Heart left ventricle (tissue), 16 donors: ENCODE measurements at regions of chr4 and their contacts with region 1.

Region 1: GRCh38 chr4:44760142-44760898 is 34.0 kb upstream of the GNPDA2 start:
- DNase-seq: no peak
- ATAC-seq: peak; percentile 37 to 83 (median 68)
- H3K4me3 ChIP-seq: no peak overlapping the region
- H3K27ac ChIP-seq: peak overlapping the region in 1 of 12 donors; percentile 16
- H3K4me1 ChIP-seq: peaks cover 0 to 4% (median 0%) of the 10 kb centered on the region in 12 donors
- H3K27me3 ChIP-seq: no peaks in the 10 kb centered on the region
- CTCF ChIP-seq: peak; percentile 30 to 62 (median 48)
- POLR2A ChIP-seq: no peak

Region 2: DNA sequence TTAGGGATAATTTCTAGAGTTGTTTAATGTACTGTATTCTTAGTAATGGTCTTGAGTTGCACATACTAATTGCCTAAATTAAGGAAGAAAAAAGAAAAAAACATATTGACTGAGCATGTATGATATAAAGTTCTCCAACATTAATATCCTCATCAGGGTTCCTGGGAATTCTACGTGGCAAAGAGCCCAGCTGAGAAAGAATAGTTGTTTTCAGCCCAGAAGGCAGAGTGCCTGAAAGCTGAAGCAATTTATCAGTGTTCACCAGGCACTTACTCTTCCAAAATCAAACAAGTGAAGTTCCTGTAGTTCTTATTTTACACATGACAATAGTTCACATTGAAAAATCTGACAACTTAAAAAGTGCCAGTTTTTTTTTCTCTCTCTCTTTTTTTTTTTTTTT is 136.6 kb before region 1 on chr4:
- intact Hi-C with region 1: no loop called
- DNase-seq: no peak
- ATAC-seq: no peak
- H3K4me3 ChIP-seq: no peak overlapping the region
- H3K27ac ChIP-seq: no peak overlapping the region
- H3K4me1 ChIP-seq: no peaks in the 10 kb centered on the region
- H3K27me3 ChIP-seq: no peaks in the 10 kb centered on the region
- CTCF ChIP-seq: no peak
- POLR2A ChIP-seq: no peak

Region 3: GRCh38 chr4:44662623-44663005 is 97.7 kb before region 1 on chr4:
- intact Hi-C with region 1: no loop called
- DNase-seq: no peak
- ATAC-seq: no peak
- H3K4me3 ChIP-seq: no peak overlapping the region
- H3K27ac ChIP-seq: no peak overlapping the region
- H3K4me1 ChIP-seq: no peaks in the 10 kb centered on the region
- H3K27me3 ChIP-seq: no peaks in the 10 kb centered on the region
- CTCF ChIP-seq: no peak
- POLR2A ChIP-seq: no peak

Region 4: DNA sequence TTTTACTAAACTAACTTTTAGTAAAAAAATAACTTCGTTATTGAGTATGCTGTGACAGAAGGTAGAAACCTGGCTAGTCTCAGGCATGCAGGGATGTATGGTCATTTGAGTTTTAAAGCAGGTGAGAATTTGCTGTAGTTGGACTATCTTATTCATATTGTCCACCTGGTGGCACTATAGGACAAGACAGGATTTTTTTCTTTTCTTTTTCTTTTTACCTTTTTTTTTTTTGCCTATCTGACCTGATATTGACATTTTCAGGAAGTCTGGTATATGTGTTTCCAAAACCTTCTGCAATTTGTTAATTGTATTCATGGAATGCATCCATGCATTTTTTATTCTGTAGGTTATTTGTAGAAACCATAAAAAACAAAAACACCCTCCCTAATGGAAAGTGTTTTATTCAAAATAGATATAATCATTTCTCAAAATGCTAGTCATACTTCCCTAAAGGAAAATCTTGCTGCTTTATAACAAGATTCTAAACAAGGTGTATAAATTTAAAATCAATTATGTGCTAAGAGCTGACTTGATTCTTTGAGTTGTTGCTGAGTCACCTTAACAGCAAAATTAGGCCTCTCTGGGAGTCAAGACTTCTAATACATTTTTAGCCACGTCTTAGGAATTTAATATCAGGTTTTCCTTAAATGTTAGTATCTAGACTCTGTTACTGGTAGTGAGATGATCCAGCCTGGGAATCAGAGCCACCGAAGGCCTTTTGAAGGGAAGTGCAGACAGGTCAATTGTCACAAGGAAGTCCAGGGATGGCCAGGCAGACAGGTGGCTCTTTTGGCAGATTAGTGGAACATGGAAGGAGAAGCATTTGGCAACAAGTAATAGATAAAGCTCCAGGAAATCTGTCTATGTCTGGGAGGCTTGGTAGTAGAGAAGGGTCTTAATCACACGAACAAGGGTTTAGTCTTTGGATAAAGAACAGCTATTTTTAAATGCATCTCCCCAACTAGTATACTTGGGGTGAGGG is 167.4 kb after region 1 on chr4:
- intact Hi-C with region 1: loop called in 7 of 10 experiments (anchors 2 to 10 kb)
- DNase-seq: no peak
- ATAC-seq: no peak
- H3K4me3 ChIP-seq: no peak overlapping the region
- H3K27ac ChIP-seq: no peak overlapping the region
- H3K4me1 ChIP-seq: peaks cover 0 to 17% (median 0%) of the 10 kb centered on the region in 12 donors
- H3K27me3 ChIP-seq: no peaks in the 10 kb centered on the region
- CTCF ChIP-seq: peak; percentile 26 to 64 (median 48)
- POLR2A ChIP-seq: no peak

Region 5: DNA sequence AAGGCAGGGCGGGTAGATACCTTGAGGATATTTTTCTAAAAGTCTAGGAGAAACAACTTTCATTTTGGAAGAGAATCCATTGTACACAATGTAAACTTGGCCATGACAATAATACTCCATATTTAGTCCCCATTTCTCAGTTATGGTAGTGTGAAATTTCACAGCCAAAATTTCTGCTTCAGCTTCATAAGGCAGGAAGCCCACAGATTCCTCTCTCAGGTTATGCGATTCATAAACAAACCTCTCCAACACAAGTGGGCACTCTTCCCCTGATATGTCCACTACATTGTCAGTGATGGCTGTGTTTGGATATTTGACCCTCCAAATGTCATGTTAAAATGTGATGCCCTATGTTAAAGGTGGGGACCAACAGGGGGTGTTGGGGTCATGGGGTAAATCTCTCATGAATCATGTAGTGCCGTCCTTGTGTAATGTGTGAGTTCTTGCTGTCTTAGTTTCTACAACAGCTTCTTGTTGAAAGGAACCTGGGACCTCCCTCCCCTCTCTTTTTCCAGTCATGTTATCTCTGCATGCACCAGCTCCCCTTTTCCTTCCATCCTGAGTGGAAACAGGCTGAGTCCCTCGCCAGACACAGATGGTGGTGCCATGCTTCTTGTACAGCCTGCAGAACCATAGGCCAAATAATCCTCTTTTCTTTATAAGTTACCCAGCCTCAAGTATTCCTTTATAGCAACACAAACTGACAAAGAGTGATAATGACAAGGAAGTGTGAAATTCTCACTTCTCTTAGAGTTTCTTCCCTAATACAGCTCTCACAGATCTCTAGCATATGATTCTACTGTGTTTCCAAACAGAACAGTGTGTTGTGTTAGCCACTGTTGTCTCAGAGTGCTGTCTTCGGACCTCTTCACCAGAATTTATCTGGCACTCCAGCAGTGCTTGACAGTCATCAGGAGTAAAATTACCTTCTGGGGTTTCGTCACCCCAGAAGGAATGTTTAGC is 564.4 kb after region 1 on chr4:
- intact Hi-C with region 1: loop called in 1 of 10 experiments (anchors 10 kb)
- DNase-seq: peak in 3 of 5 donors; percentile 17 to 57 (median 43)
- ATAC-seq: peak; percentile 65 to 98 (median 76)
- H3K4me3 ChIP-seq: no peak overlapping the region
- H3K27ac ChIP-seq: peak overlapping the region in 5 of 12 donors; percentile 9 to 61 (median 20)
- H3K4me1 ChIP-seq: no peaks in the 10 kb centered on the region
- H3K27me3 ChIP-seq: no peaks in the 10 kb centered on the region
- CTCF ChIP-seq: no peak
- POLR2A ChIP-seq: no peak

Region 6: GRCh38 chr4:45442466-45442865 is 682.1 kb after region 1 on chr4:
- intact Hi-C with region 1: loop called in 6 of 10 experiments (anchors 5 to 10 kb)
- DNase-seq: no peak
- ATAC-seq: peak in 3 of 4 donors; percentile 59 to 65 (median 62)
- H3K4me3 ChIP-seq: no peak overlapping the region
- H3K27ac ChIP-seq: no peak overlapping the region
- H3K4me1 ChIP-seq: peaks cover 0 to 5% (median 0%) of the 10 kb centered on the region in 12 donors
- H3K27me3 ChIP-seq: no peaks in the 10 kb centered on the region
- CTCF ChIP-seq: peak in 9 of 12 donors; percentile 6 to 47 (median 28)
- POLR2A ChIP-seq: no peak

Region 7: GRCh38 chr4:45550766-45551366 is 790.5 kb after region 1 on chr4:
- intact Hi-C with region 1: loop called in 2 of 10 experiments (anchors 5 to 10 kb)
- DNase-seq: no peak
- ATAC-seq: no peak
- H3K4me3 ChIP-seq: no peak overlapping the region
- H3K27ac ChIP-seq: no peak overlapping the region
- H3K4me1 ChIP-seq: no peaks in the 10 kb centered on the region
- H3K27me3 ChIP-seq: no peaks in the 10 kb centered on the region
- CTCF ChIP-seq: peak in 2 of 12 donors; percentile 14 to 18
- POLR2A ChIP-seq: no peak